B cell (primary cell): ENCODE measurements at regions of chr11 and their contacts with region 1.

Region 1: GRCh38 chr11:96342961-96343711 is at the start of gene MAML2:
- DNase-seq: peak; percentile 93
- ATAC-seq: peak; percentile 86
- H3K4me3 ChIP-seq: peak within 1 kb of the TSS; percentile 82 to 100 (median 92)
- H3K4me3 Mint-ChIP-seq: peak within 1 kb of the TSS; percentile 99
- H3K27ac ChIP-seq: peak within 1 kb of the TSS; percentile 45 to 77
- H3K27ac Mint-ChIP-seq: peak within 1 kb of the TSS; percentile 95
- H3K4me1 ChIP-seq: peaks cover 38 to 43% of the 10 kb centered on the region in 2 donors
- H3K4me1 Mint-ChIP-seq: peaks cover 51% of the 10 kb centered on the region
- H3K27me3 ChIP-seq: no peaks in the 10 kb centered on the region
- H3K27me3 Mint-ChIP-seq: no peaks in the 10 kb centered on the region
- CTCF ChIP-seq: peak; percentile 94
- total RNA-seq, gene MAML2: 26.0 and 26.4 TPM in 2 replicates

Region 2: DNA sequence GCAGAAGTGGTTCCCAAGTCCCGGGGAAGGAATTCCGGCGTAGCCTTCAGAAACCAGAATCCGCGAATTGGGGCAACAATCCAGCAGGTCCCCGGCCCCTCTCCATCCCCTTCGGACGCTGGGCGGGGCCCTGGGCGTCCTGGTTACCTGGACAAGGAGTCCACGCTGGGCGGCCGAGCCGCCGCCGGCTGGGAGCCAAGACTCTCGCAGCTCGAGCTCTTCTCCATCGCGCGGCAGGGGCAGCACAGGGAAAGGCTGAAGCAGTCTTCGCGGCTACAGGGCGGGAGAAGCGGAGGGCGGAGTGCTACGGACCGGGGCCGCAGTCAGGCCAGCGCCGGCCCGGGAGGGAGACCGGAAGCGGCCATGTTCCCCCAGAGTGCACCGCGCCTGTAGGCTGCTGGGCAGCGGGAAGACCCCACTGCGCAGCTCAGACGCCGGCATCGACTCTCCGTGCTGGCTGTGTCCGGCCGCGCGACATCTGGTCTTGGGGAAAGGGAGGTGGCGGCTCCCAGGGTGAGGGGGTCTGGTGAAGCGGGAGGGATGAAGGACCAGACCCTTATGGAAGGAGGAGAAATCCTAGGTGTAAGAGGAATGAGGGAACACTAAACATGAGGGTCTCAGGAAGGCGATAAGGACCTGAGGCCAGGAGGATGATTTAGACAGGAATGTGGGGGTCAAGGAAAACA is 419.3 kb before region 1 on chr11 and contains the start of gene MTMR2:
- CTCF ChIA-PET with region 1: interaction called, 3 read pairs
- POLR2A ChIA-PET with region 1: no interaction called
- intact Hi-C with region 1: loop called (anchors 1 kb)
- DNase-seq: peak; percentile 65
- ATAC-seq: peak; percentile 95
- H3K4me3 ChIP-seq: peak within 1 kb of the TSS; percentile 70 to 95 (median 86)
- H3K4me3 Mint-ChIP-seq: peak within 1 kb of the TSS; percentile 98
- H3K27ac ChIP-seq: peak within 1 kb of the TSS; percentile 68 to 83
- H3K27ac Mint-ChIP-seq: peak within 1 kb of the TSS; percentile 97
- H3K4me1 ChIP-seq: peaks cover 9 to 16% of the 10 kb centered on the region in 2 donors
- H3K4me1 Mint-ChIP-seq: peaks cover 25% of the 10 kb centered on the region
- H3K27me3 ChIP-seq: peaks cover 0 to 2% (median 0%) of the 10 kb centered on the region in 4 experiments
- H3K27me3 Mint-ChIP-seq: peaks cover 13% of the 10 kb centered on the region
- CTCF ChIP-seq: no peak
- total RNA-seq, gene MTMR2: 15.4 and 16.1 TPM in 2 replicates

Region 3: GRCh38 chr11:96091476-96091875 is 251.7 kb before region 1 on chr11:
- CTCF ChIA-PET with region 1: interaction called, 143 read pairs
- POLR2A ChIA-PET with region 1: interaction called, 4 read pairs
- intact Hi-C with region 1: loop called (anchors 1 kb)
- DNase-seq: peak; percentile 41
- ATAC-seq: peak; percentile 82
- H3K4me3 ChIP-seq: no peak overlapping the region
- H3K4me3 Mint-ChIP-seq: no peak overlapping the region
- H3K27ac ChIP-seq: no peak overlapping the region
- H3K27ac Mint-ChIP-seq: no peak overlapping the region
- H3K4me1 ChIP-seq: no peaks in the 10 kb centered on the region
- H3K4me1 Mint-ChIP-seq: peaks cover 9% of the 10 kb centered on the region
- H3K27me3 ChIP-seq: no peaks in the 10 kb centered on the region
- H3K27me3 Mint-ChIP-seq: no peaks in the 10 kb centered on the region
- CTCF ChIP-seq: peak; percentile 40

Region 4: DNA sequence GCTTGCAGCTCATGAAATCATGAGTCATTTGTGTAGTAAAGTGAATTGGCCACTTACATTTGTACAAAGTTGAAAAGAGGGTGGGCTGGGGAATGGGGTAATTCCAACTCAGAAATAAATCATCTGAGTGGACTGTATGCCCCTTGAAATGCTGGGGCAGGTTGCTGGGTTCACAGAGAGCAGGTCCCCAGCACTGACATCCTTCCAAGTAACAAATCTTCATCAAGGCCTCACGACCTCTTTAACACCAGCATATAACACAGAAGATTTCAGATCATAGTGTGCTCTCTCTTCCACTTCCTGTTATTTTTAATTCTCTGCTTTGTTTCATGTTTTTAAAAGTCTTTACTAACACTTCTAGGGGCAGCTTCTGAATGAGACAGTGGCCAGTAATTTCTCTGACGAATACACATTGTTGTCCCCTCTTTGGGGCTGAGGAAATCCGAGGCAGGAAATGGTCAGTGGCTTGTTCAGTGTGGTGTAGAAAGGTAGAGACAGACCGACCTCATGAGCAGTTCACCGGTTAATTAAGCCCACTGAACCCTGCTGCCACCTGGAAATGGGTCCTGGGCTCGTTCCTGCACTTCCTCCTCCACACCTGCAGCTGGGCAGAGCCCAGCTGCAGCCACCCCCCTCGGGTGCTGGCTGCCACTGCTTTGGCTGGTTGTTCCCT is 127.9 kb before region 1 on chr11:
- CTCF ChIA-PET with region 1: interaction called, 28 read pairs
- POLR2A ChIA-PET with region 1: interaction called, 6 read pairs
- intact Hi-C with region 1: loop called (anchors 1 kb)
- DNase-seq: peak; percentile 83
- ATAC-seq: peak; percentile 86
- H3K4me3 ChIP-seq: peak overlapping the region in 3 of 5 experiments; percentile 15 to 37 (median 16)
- H3K4me3 Mint-ChIP-seq: peak overlapping the region; percentile 77
- H3K27ac ChIP-seq: peak overlapping the region; percentile 72 to 84
- H3K27ac Mint-ChIP-seq: peak overlapping the region; percentile 98
- H3K4me1 ChIP-seq: peaks cover 78 to 84% of the 10 kb centered on the region in 2 donors
- H3K4me1 Mint-ChIP-seq: peaks cover 80% of the 10 kb centered on the region
- H3K27me3 ChIP-seq: no peaks in the 10 kb centered on the region
- H3K27me3 Mint-ChIP-seq: no peaks in the 10 kb centered on the region
- CTCF ChIP-seq: no peak

Region 5: DNA sequence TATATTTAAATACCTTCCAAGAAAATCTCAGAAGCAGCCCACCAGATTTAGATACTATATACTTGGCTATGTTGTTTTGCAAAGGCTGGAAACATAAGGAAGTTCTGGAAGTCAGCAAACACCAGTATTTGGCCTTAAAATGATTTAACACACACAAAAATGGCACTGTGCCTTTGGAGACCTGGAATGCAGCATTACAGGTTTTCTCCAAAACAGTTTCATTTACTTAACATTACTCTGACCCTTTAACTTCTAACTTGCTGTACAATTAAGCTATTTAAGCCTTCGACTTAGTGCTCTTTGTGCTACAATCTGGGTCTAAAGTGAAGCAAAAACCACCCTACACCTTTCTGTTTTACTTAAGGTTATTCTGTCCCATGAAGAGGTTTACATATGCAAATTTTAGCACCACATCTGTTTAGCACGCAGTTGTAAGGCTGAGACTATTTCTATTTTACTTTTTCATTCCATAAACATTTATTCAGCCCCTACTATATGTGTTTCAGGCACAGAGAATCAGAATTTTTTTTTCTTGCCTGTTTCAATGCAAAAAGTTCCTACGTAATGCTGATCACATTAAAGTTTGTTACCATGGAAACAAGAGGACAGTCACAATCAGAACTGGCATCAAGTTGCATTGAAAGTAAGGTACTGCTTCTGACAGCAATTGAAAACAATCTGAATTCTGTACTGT is 70.5 kb before region 1 on chr11:
- CTCF ChIA-PET with region 1: interaction called, 20 read pairs
- POLR2A ChIA-PET with region 1: interaction called, 5 read pairs
- intact Hi-C with region 1: no loop called
- DNase-seq: peak; percentile 65
- ATAC-seq: peak; percentile 53
- H3K4me3 ChIP-seq: no peak overlapping the region
- H3K4me3 Mint-ChIP-seq: peak overlapping the region; percentile 36
- H3K27ac ChIP-seq: peak overlapping the region; percentile 44 to 81
- H3K27ac Mint-ChIP-seq: peak overlapping the region; percentile 18
- H3K4me1 ChIP-seq: peaks cover 18 to 22% of the 10 kb centered on the region in 2 donors
- H3K4me1 Mint-ChIP-seq: peaks cover 35% of the 10 kb centered on the region
- H3K27me3 ChIP-seq: no peaks in the 10 kb centered on the region
- H3K27me3 Mint-ChIP-seq: no peaks in the 10 kb centered on the region
- CTCF ChIP-seq: no peak

Region 6: GRCh38 chr11:96389720-96390487 is 46.8 kb after region 1 on chr11 and contains the starts of genes CCDC82 and JRKL:
- CTCF ChIA-PET with region 1: interaction called, 28 read pairs
- POLR2A ChIA-PET with region 1: interaction called, 5 read pairs
- intact Hi-C with region 1: loop called (anchors 1 kb)
- DNase-seq: peak; percentile 96
- ATAC-seq: peak; percentile 99
- H3K4me3 ChIP-seq: peak within 1 kb of the TSS; percentile 77 to 89 (median 84)
- H3K4me3 Mint-ChIP-seq: peak within 1 kb of the TSS; percentile 93
- H3K27ac ChIP-seq: peak within 1 kb of the TSS; percentile 82 to 83
- H3K27ac Mint-ChIP-seq: peak within 1 kb of the TSS; percentile 95
- H3K4me1 ChIP-seq: peaks cover 13 to 18% of the 10 kb centered on the region in 2 donors
- H3K4me1 Mint-ChIP-seq: peaks cover 26% of the 10 kb centered on the region
- H3K27me3 ChIP-seq: no peaks in the 10 kb centered on the region
- H3K27me3 Mint-ChIP-seq: no peaks in the 10 kb centered on the region
- CTCF ChIP-seq: no peak
- total RNA-seq, gene CCDC82: 34.1 and 37.9 TPM in 2 replicates
- total RNA-seq, gene JRKL: 12.5 and 12.9 TPM in 2 replicates

Region 7: GRCh38 chr11:96554236-96554820 is 211.2 kb after region 1 on chr11:
- CTCF ChIA-PET with region 1: no interaction called
- POLR2A ChIA-PET with region 1: no interaction called
- intact Hi-C with region 1: no loop called
- DNase-seq: no peak
- ATAC-seq: no peak
- H3K4me3 ChIP-seq: no peak overlapping the region
- H3K4me3 Mint-ChIP-seq: no peak overlapping the region
- H3K27ac ChIP-seq: no peak overlapping the region
- H3K27ac Mint-ChIP-seq: no peak overlapping the region
- H3K4me1 ChIP-seq: no peaks in the 10 kb centered on the region
- H3K4me1 Mint-ChIP-seq: no peaks in the 10 kb centered on the region
- H3K27me3 ChIP-seq: no peaks in the 10 kb centered on the region
- H3K27me3 Mint-ChIP-seq: no peaks in the 10 kb centered on the region
- CTCF ChIP-seq: no peak